Heart left ventricle (tissue), 16 donors: ENCODE measurements at regions of chr9 and their contacts with region 1.

Region 1: GRCh38 chr9:116661037-116661954 is 25.8 kb upstream of the TRIM32 start:
- DNase-seq: peak in 1 of 5 donors; percentile 15
- ATAC-seq: peak; percentile 59 to 86 (median 82)
- H3K4me3 ChIP-seq: no peak overlapping the region
- H3K27ac ChIP-seq: no peak overlapping the region
- H3K4me1 ChIP-seq: peaks cover 0 to 18% (median 7%) of the 10 kb centered on the region in 12 donors
- H3K27me3 ChIP-seq: no peaks in the 10 kb centered on the region
- CTCF ChIP-seq: peak; percentile 44 to 80 (median 70)
- POLR2A ChIP-seq: no peak

Region 2: GRCh38 chr9:115591584-115591984 is 1069.7 kb before region 1 on chr9:
- intact Hi-C with region 1: loop called (anchors 1 to 10 kb)
- DNase-seq: peak in 4 of 5 donors; percentile 33 to 64 (median 52)
- ATAC-seq: peak; percentile 53 to 92 (median 86)
- H3K4me3 ChIP-seq: no peak overlapping the region
- H3K27ac ChIP-seq: peak overlapping the region in 1 of 12 donors; percentile 38
- H3K4me1 ChIP-seq: peaks cover 0 to 6% (median 0%) of the 10 kb centered on the region in 12 donors
- H3K27me3 ChIP-seq: peaks cover 0 to 25% (median 3%) of the 10 kb centered on the region in 9 donors
- CTCF ChIP-seq: peak; percentile 43 to 81 (median 65)
- POLR2A ChIP-seq: no peak

Region 3: DNA sequence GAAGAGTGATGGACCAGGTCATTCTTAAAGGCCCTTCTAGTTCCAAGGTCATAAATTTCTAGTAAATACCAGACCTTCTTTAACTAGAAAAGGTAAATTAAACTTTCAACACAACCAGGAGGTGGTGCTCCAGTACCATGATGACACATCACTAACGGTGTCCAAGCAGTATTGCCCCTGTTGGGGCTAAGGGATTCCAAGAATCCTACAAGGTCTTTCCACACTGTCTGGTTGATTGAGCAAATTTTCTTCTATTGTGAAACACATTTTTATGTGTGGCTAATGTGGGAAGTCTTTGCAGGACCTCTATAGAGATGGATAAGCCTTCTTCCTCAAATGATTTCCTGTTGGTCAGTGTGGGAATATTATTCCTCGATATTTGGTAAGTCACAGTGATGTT is 967.3 kb before region 1 on chr9:
- intact Hi-C with region 1: loop called in 1 of 10 experiments (anchors 10 kb)
- DNase-seq: no peak
- ATAC-seq: peak in 2 of 4 donors; percentile 77 to 79
- H3K4me3 ChIP-seq: no peak overlapping the region
- H3K27ac ChIP-seq: no peak overlapping the region
- H3K4me1 ChIP-seq: no peaks in the 10 kb centered on the region
- H3K27me3 ChIP-seq: no peaks in the 10 kb centered on the region
- CTCF ChIP-seq: peak in 8 of 12 donors; percentile 11 to 43 (median 24)
- POLR2A ChIP-seq: no peak

Region 4: GRCh38 chr9:116580853-116581252 is 80.4 kb before region 1 on chr9:
- intact Hi-C with region 1: no loop called
- DNase-seq: peak in 4 of 5 donors; percentile 40 to 48 (median 42)
- ATAC-seq: peak in 3 of 4 donors; percentile 22 to 62 (median 57)
- H3K4me3 ChIP-seq: no peak overlapping the region
- H3K27ac ChIP-seq: peak overlapping the region in 5 of 12 donors; percentile 5 to 68 (median 48)
- H3K4me1 ChIP-seq: peaks cover 0 to 23% (median 4%) of the 10 kb centered on the region in 12 donors
- H3K27me3 ChIP-seq: no peaks in the 10 kb centered on the region
- CTCF ChIP-seq: no peak
- POLR2A ChIP-seq: no peak

Region 5: GRCh38 chr9:116791326-116791725 is 130.0 kb after region 1 on chr9:
- intact Hi-C with region 1: no loop called
- DNase-seq: no peak
- ATAC-seq: no peak
- H3K4me3 ChIP-seq: no peak overlapping the region
- H3K27ac ChIP-seq: no peak overlapping the region
- H3K4me1 ChIP-seq: peaks cover 0 to 2% (median 0%) of the 10 kb centered on the region in 12 donors
- H3K27me3 ChIP-seq: no peaks in the 10 kb centered on the region
- CTCF ChIP-seq: no peak
- POLR2A ChIP-seq: no peak

Region 6: GRCh38 chr9:117714282-117714681 is 1053.0 kb after region 1 on chr9:
- intact Hi-C with region 1: no loop called
- DNase-seq: no peak
- ATAC-seq: no peak
- H3K4me3 ChIP-seq: no peak overlapping the region
- H3K27ac ChIP-seq: no peak overlapping the region
- H3K4me1 ChIP-seq: peaks cover 0 to 85% (median 16%) of the 10 kb centered on the region in 12 donors
- H3K27me3 ChIP-seq: no peaks in the 10 kb centered on the region
- CTCF ChIP-seq: peak in 1 of 12 donors; percentile 7
- POLR2A ChIP-seq: no peak